ENCODE measurements at regions of chr17 and their contacts with region 1.

Region 1: GRCh38 chr17:68205251-68205807 is 42.5 kb upstream of the AMZ2 start:
- DNase-seq: peak; percentile 91 to 97 (median 94)
- ATAC-seq: peak; percentile 80 to 96 (median 92)
- H3K4me3 ChIP-seq: peak overlapping the region; percentile 45 to 90 (median 78)
- H3K27ac ChIP-seq: peak overlapping the region; percentile 74 to 92 (median 86)
- H3K4me1 ChIP-seq: peaks cover 0 to 29% (median 12%) of the 10 kb centered on the region in 12 donors
- H3K27me3 ChIP-seq: peaks cover 0 to 4% (median 0%) of the 10 kb centered on the region in 9 donors
- CTCF ChIP-seq: peak; percentile 84 to 99 (median 92)
- POLR2A ChIP-seq: peak in 1 of 2 donors; percentile 71

Region 2: DNA sequence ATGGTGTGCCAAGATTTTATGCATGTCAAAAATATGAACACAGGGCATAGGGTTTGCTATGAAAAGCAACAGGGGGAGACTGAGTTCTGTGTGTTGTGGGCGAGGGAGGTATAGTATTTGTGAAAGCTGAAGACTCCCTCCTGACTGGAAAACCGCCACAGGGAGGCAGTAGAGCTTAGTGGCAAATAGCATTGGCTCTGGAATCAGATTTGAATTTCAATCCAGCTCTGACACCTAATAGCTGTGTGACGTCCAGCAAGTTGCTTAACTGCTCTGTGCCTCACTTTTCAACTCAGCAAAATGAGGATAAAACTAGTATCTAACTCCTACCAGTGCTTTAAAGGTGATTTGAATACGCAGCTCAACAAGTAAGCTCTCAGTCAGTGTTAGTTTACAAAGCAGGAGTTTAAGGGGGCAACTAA is 147.8 kb before region 1 on chr17:
- intact Hi-C with region 1: loop called in 2 of 10 experiments (anchors 5 to 10 kb)
- DNase-seq: no peak
- ATAC-seq: no peak
- H3K4me3 ChIP-seq: no peak overlapping the region
- H3K27ac ChIP-seq: no peak overlapping the region
- H3K4me1 ChIP-seq: peaks cover 0 to 33% (median 15%) of the 10 kb centered on the region in 12 donors
- H3K27me3 ChIP-seq: no peaks in the 10 kb centered on the region
- CTCF ChIP-seq: peak; percentile 20 to 54 (median 43)
- POLR2A ChIP-seq: no peak

Region 3: GRCh38 chr17:68172461-68172954 is 32.8 kb before region 1 on chr17:
- intact Hi-C with region 1: loop called in 3 of 10 experiments (anchors 1 to 5 kb)
- DNase-seq: peak; percentile 53 to 73 (median 62)
- ATAC-seq: peak; percentile 54 to 81 (median 77)
- H3K4me3 ChIP-seq: no peak overlapping the region
- H3K27ac ChIP-seq: no peak overlapping the region
- H3K4me1 ChIP-seq: peaks cover 0 to 4% (median 0%) of the 10 kb centered on the region in 12 donors
- H3K27me3 ChIP-seq: no peaks in the 10 kb centered on the region
- CTCF ChIP-seq: peak; percentile 91 to 99 (median 97)
- POLR2A ChIP-seq: no peak

Region 4: GRCh38 chr17:68247445-68248198 is 42.3 kb after region 1 on chr17 and contains the start of gene AMZ2:
- intact Hi-C with region 1: loop called in 4 of 10 experiments (anchors 5 kb)
- DNase-seq: peak; percentile 94 to 99 (median 96)
- ATAC-seq: peak; percentile 98 to 100 (median 98)
- H3K4me3 ChIP-seq: peak within 1 kb of the TSS; percentile 68 to 94 (median 86)
- H3K27ac ChIP-seq: peak within 1 kb of the TSS; percentile 89 to 99 (median 98)
- H3K4me1 ChIP-seq: peaks cover 0 to 26% (median 13%) of the 10 kb centered on the region in 12 donors
- H3K27me3 ChIP-seq: no peaks in the 10 kb centered on the region
- CTCF ChIP-seq: no peak
- POLR2A ChIP-seq: peak; percentile 76 to 98
- total RNA-seq, gene AMZ2: 59.0 to 141 (median 91.3) TPM